GM12878 (cell line): ENCODE measurements at regions of chr6 and their contacts with region 1.

Region 1: DNA sequence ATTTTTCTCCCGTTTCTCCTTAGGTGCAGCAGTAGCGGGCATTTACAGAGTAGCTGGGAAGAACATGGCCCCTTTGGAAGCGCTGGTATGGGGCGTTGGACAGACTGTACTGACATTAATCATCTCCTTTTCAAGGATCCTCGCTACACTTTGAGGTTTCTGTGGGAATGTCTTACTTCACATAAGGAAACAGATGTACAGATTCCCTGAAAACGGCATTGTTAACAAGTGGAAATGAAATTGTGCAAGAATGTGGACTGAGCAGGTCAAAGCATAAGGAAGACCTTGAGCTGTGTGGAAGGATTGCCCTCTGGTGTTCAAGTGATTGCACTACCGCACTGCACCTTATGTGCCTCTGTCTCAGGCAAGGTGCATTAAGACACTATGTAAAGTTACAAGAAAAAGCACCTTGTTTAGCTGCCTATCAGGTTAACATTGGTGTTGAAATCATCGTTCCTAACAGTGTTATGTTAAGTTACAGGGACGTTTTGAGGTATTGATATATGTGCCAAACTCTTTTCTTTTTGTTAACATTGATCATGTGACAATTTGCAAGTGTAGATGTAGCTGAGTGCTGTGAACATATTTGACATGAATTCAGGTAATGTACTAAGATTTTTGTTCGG is 38.0 kb downstream of the TMEM170B start:
- DNase-seq: peak; percentile 74
- ATAC-seq: peak; percentile 100
- H3K4me3 ChIP-seq: no peak overlapping the region
- H3K27ac ChIP-seq: no peak overlapping the region
- H3K4me1 ChIP-seq: no peaks in the 10 kb centered on the region; the same call in 1 of the 2 replicates
- H3K27me3 ChIP-seq: no peaks in the 10 kb centered on the region
- CTCF ChIP-seq: peak; percentile 92 to 99 (median 97); a peak in 5 of 6 replicates
- EP300 ChIP-seq: no peak
- POLR2A ChIP-seq: no peak
- RAD21 ChIP-seq: peak; percentile 97

Region 2: DNA sequence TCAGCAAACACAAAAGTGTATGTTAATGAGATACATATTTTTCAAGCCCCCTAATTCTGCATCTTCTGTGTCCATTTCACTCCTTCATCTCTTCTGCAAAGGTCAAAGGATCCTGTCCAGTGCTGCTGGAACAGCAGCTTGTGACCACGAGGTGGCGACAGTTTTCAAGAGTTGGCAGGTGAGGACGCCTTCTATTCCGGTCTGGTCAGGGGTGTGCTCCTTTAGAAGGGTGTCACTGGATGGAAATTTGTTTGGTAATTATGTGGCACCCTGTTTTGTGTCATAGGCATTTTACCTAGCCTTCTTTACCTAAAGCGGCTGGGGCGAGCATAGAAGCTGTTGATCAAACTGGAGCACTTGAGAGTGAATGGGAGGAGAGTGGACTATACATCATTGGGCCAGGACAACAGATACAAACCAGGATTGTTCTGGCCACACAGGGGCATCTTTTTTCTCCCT is 431.1 kb before region 1 on chr6:
- CTCF ChIA-PET with region 1: interaction called, 55 read pairs
- POLR2A ChIA-PET with region 1: no interaction called
- RAD21 ChIA-PET with region 1: interaction called, 27 read pairs
- SMC1A ChIA-PET with region 1: interaction called, 20 read pairs
- in situ Hi-C with region 1: loop called (anchors 10 kb)
- intact Hi-C with region 1: loop called (anchors 1 kb)
- DNase-seq: peak; percentile 49
- ATAC-seq: peak; percentile 99
- H3K4me3 ChIP-seq: no peak overlapping the region
- H3K27ac ChIP-seq: no peak overlapping the region
- H3K4me1 ChIP-seq: peaks cover 3% of the 10 kb centered on the region; the same call in 1 of the 2 replicates
- H3K27me3 ChIP-seq: no peaks in the 10 kb centered on the region
- CTCF ChIP-seq: peak; percentile 93 to 97 (median 95)
- EP300 ChIP-seq: no peak
- POLR2A ChIP-seq: no peak
- RAD21 ChIP-seq: peak; percentile 100

Region 3: GRCh38 chr6:11509471-11509870 is 66.0 kb before region 1 on chr6:
- CTCF ChIA-PET with region 1: interaction called, 26 read pairs
- POLR2A ChIA-PET with region 1: no interaction called
- RAD21 ChIA-PET with region 1: interaction called, 18 read pairs
- SMC1A ChIA-PET with region 1: interaction called, 12 read pairs
- in situ Hi-C with region 1: no loop called
- intact Hi-C with region 1: no loop called
- DNase-seq: no peak
- ATAC-seq: no peak
- H3K4me3 ChIP-seq: no peak overlapping the region
- H3K27ac ChIP-seq: no peak overlapping the region
- H3K4me1 ChIP-seq: peaks cover 12% of the 10 kb centered on the region
- H3K27me3 ChIP-seq: no peaks in the 10 kb centered on the region
- CTCF ChIP-seq: no peak
- EP300 ChIP-seq: no peak
- POLR2A ChIP-seq: no peak
- RAD21 ChIP-seq: no peak

Region 4: DNA sequence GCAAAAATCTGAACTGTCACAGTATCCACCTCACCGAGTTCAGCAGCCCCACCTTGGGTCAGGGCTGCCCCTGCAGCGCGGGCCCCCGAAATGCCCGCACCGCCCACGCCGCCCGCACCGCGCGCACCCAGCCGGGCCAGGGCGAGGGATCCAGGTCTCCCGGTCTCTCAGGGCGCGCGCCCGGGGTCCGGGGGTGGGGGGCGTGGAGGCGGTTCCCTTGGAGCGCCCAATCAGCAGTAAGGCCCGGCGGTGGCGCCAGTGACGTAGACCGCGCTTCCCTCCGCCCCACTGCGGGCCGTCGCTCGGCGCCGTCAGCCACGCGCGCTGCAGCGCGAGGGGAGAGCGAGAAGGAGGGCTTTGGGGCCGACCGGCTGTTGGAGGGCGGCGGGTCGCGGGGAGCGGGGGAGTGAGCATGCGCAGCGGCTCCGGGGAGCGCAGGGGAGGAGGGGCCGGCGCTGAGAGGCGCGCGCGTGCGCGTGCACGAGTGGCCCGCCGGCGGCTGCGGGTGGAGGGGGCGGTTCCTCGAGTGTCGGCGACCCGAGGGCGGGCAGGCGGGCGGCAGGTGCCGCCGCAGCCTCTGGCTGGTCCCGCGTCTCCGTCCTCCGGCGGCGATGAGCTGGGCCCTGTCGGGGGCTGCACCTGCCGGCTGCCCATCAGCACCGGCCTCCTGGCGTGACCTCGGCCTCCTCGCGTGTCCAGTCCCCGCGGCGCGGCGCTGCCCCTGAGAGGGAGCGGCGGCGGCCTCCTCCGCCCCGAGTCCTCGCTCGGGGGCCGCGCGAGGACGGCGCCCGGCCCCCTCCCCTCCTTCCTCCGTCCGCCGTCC is 38.1 kb before region 1 on chr6 and contains the start of gene TMEM170B:
- CTCF ChIA-PET with region 1: interaction called, 23 read pairs
- POLR2A ChIA-PET with region 1: no interaction called
- RAD21 ChIA-PET with region 1: interaction called, 8 read pairs
- SMC1A ChIA-PET with region 1: interaction called, 15 read pairs
- in situ Hi-C with region 1: no loop called
- intact Hi-C with region 1: loop called (anchors 1 kb)
- DNase-seq: peak; percentile 82
- ATAC-seq: peak; percentile 98
- H3K4me3 ChIP-seq: peak within 1 kb of the TSS; percentile 96
- H3K27ac ChIP-seq: peak within 1 kb of the TSS; percentile 69
- H3K4me1 ChIP-seq: no peaks in the 10 kb centered on the region; the same call in 1 of the 2 replicates
- H3K27me3 ChIP-seq: no peaks in the 10 kb centered on the region
- CTCF ChIP-seq: no peak
- EP300 ChIP-seq: 0 out of 4 replicates have a peak, but pooled peaks of 1 of the 2 experiments have one; percentile 5
- POLR2A ChIP-seq: peak; percentile 78
- RAD21 ChIP-seq: no peak
- polyA plus RNA-seq, gene TMEM170B: 1.6 to 1.8 TPM

Region 5: DNA sequence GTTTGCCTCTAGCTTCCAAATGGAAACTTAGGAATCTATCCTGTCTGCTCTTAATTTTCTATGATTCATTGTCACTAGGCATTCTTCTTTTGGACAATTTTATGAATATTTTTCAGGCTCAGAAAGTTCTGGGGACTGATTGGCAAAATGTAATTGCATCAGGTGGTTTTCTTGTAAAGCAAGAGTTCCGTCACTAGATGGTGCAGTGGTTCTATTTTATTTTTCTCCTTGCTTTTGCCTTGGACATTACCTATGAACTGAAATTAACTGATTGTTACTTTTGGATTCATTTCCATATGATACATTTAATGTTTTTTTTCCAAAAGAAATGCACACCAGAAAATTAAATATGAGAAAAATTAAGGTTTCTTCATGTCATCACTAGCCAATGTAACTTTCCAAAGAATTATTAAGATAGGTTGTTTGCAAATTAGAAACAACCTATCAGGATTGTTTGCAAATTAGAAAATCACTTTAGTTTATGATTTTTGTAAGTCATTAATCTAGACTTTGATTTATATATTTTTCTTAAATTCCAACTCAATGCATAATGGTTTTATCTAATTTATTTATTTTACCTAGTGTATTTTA is 10.0 kb after region 1 on chr6:
- CTCF ChIA-PET with region 1: interaction called, 17 read pairs
- POLR2A ChIA-PET with region 1: no interaction called
- RAD21 ChIA-PET with region 1: interaction called, 6 read pairs
- SMC1A ChIA-PET with region 1: interaction called, 7 read pairs
- in situ Hi-C with region 1: no loop called
- intact Hi-C with region 1: no loop called
- DNase-seq: peak; percentile 32
- ATAC-seq: peak; percentile 70
- H3K4me3 ChIP-seq: no peak overlapping the region
- H3K27ac ChIP-seq: no peak overlapping the region
- H3K4me1 ChIP-seq: no peaks in the 10 kb centered on the region
- H3K27me3 ChIP-seq: no peaks in the 10 kb centered on the region
- CTCF ChIP-seq: peak; percentile 45 to 67 (median 59); a peak in 5 of 6 replicates
- EP300 ChIP-seq: no peak
- POLR2A ChIP-seq: no peak
- RAD21 ChIP-seq: peak; percentile 77